Adrenal gland (tissue), 19 donors: ENCODE measurements at regions of chr16 and their contacts with region 1.

Region 1: GRCh38 chr16:11164482-11165270 is 91.3 kb downstream of the SOCS1 start:
- DNase-seq: peak in 1 of 7 donors; percentile 70
- H3K4me3 ChIP-seq: no peak overlapping the region
- H3K27ac ChIP-seq: no peak overlapping the region
- H3K4me1 ChIP-seq: peaks cover 11 to 28% of the 10 kb centered on the region in 2 donors
- H3K27me3 ChIP-seq: no peaks in the 10 kb centered on the region
- CTCF ChIP-seq: no peak
- POLR2A ChIP-seq: no peak

Region 2: DNA sequence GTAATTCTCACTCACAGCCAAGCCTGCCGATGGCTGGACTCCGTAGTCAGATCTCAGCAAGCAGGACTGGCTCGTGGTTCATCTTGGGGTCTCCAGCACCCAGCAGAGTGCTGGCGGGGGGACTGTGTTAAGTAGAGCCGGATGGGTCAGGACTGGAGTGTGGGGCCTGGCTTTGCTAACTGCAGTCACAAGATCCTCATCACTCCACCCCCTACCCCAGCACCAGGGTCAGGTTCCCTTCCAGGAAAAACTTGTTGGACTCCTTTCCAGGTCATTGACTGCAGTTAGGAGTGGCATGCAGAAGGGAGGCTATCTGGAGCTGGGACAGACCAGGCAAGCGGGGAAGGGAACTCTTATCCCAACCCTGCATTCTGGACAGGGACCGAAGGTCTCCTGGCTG is 281.7 kb before region 1 on chr16:
- intact Hi-C with region 1: no loop called
- DNase-seq: peak in 2 of 7 donors; percentile 44 to 51
- H3K4me3 ChIP-seq: no peak overlapping the region
- H3K27ac ChIP-seq: no peak overlapping the region
- H3K4me1 ChIP-seq: peaks cover 7 to 8% of the 10 kb centered on the region in 2 donors
- H3K27me3 ChIP-seq: no peaks in the 10 kb centered on the region
- CTCF ChIP-seq: no peak
- POLR2A ChIP-seq: no peak

Region 3: DNA sequence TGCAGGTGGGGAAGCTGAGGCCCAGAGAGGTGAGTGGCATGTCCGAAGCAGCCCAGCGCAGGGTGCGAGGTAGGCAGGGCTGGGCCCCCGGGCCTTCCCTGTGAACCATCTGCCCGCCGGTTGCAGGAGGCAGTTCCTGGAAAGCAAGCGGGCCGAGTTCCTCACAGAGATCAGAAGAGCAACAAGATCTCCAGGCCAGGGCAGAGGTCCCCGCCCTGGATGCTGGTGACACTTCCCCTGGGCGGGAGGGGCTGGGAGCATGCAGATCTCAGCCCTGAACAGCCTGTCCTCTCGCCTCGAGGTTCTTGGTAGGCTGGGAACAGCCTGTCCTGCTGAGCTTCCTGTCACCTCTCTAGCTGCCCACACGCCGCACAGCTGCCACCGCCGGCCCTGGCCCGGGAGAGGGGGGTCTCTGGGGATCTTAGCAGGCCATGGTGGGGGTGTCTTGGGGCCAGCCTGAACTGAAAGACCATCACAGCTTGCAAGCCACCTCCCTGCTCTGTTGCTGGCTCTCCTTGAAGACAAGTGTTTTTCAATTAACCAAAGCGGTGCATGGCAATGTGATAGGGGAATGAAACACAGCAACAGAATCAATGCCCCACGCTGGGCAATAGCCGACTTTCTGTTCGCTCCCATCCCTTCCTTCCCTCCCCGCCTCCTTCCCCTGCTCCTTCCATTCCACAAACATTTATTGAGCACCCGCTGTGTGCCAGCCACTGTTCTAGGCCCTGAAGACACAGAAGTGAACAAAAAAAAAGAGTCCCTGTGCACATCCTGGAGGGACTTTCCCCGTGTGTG is 59.6 kb after region 1 on chr16:
- intact Hi-C with region 1: loop called in 1 of 2 experiments (anchors 10 kb)
- DNase-seq: peak; percentile 55 to 94 (median 73)
- H3K4me3 ChIP-seq: no peak overlapping the region
- H3K27ac ChIP-seq: peak overlapping the region; percentile 16 to 84 (median 51)
- H3K4me1 ChIP-seq: peaks cover 11 to 33% of the 10 kb centered on the region in 2 donors
- H3K27me3 ChIP-seq: no peaks in the 10 kb centered on the region
- CTCF ChIP-seq: no peak
- POLR2A ChIP-seq: no peak

Region 4: GRCh38 chr16:11283820-11284248 is 119.2 kb after region 1 on chr16:
- intact Hi-C with region 1: no loop called
- DNase-seq: peak in 1 of 7 donors; percentile 17
- H3K4me3 ChIP-seq: no peak overlapping the region
- H3K27ac ChIP-seq: no peak overlapping the region
- H3K4me1 ChIP-seq: no peaks in the 10 kb centered on the region
- H3K27me3 ChIP-seq: no peaks in the 10 kb centered on the region
- CTCF ChIP-seq: no peak
- POLR2A ChIP-seq: no peak